B cell (primary cell): ENCODE measurements at regions of chr6 and their contacts with region 1.

Region 1: GRCh38 chr6:6588064-6588923 is at the start of gene LY86:
- DNase-seq: peak; percentile 87
- ATAC-seq: peak; percentile 65
- H3K4me3 ChIP-seq: peak within 1 kb of the TSS; percentile 52 to 84 (median 81)
- H3K4me3 Mint-ChIP-seq: peak within 1 kb of the TSS; percentile 98
- H3K27ac ChIP-seq: peak within 1 kb of the TSS; percentile 88 to 91
- H3K27ac Mint-ChIP-seq: peak within 1 kb of the TSS; percentile 99
- H3K4me1 ChIP-seq: peaks cover 83 to 85% of the 10 kb centered on the region in 2 donors
- H3K4me1 Mint-ChIP-seq: peaks cover 93% of the 10 kb centered on the region
- H3K27me3 ChIP-seq: no peaks in the 10 kb centered on the region
- H3K27me3 Mint-ChIP-seq: no peaks in the 10 kb centered on the region
- CTCF ChIP-seq: peak; percentile 16
- total RNA-seq, gene LY86: 68.7 and 76.7 TPM in 2 replicates

Region 2: DNA sequence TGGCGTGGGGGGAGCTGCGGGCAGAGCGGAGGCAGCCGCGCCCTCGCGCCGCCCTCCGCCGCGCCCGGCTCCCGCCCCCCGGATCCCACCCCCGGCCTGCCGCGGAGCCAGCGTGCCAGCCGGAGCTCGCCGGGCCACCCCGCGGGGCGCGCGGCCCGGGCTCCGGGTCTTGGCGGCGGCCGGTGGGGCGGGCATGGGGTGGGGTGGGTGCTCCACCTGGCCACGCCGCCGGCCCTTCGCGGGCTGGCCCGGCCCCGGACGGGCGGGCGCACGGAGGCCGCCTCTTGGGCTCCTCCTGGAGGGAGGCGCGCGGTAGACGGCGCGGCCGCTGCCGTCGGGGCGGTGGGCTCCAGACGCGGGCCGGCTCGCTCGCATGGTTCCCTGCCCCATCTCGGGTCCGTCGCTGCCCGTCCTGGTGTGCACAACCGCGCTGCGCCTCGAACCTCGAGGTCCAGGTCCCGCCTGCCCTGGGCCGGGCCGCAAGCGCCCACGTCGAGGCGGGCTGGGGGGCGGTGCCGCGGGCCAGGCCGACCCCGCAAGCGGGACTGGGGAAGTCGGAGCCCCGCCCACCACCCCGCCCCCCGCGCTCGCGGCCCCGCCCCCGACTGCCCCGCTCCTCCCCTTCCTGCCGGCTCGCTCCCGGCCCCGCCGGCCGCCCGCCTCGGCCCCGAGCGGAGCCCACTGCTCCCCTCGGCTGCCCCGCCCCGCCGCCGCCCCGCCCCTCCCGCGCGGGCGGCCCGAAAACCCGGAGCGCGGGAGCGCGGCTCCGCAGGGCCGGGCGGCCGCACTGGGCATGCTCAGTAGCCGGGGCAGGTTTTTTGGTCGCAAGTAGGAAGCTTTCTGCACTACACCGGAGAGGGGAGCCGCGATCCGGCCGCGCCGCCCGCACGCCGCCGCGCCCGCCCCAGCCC is 1812.5 kb before region 1 on chr6 and contains the start of gene CDYL:
- CTCF ChIA-PET with region 1: no interaction called
- POLR2A ChIA-PET with region 1: no interaction called
- intact Hi-C with region 1: loop called (anchors 10 kb)
- DNase-seq: peak; percentile 94
- ATAC-seq: peak; percentile 74
- H3K4me3 ChIP-seq: peak within 1 kb of the TSS; percentile 51 to 83 (median 72)
- H3K4me3 Mint-ChIP-seq: peak within 1 kb of the TSS; percentile 97
- H3K27ac ChIP-seq: peak within 1 kb of the TSS in 1 of 2 donors; percentile 69
- H3K27ac Mint-ChIP-seq: peak within 1 kb of the TSS; percentile 93
- H3K4me1 ChIP-seq: peaks cover 19 to 26% of the 10 kb centered on the region in 2 donors
- H3K4me1 Mint-ChIP-seq: peaks cover 41% of the 10 kb centered on the region
- H3K27me3 ChIP-seq: no peaks in the 10 kb centered on the region
- H3K27me3 Mint-ChIP-seq: no peaks in the 10 kb centered on the region
- CTCF ChIP-seq: no peak
- total RNA-seq, gene CDYL: 61.0 and 63.0 TPM in 2 replicates

Region 3: GRCh38 chr6:6331946-6332601 is 256.2 kb before region 1 on chr6:
- CTCF ChIA-PET with region 1: no interaction called
- POLR2A ChIA-PET with region 1: interaction called, 3 read pairs
- intact Hi-C with region 1: loop called (anchors 2 kb)
- DNase-seq: peak; percentile 69
- ATAC-seq: peak; percentile 78
- H3K4me3 ChIP-seq: peak overlapping the region in 1 of 5 experiments; percentile 13
- H3K4me3 Mint-ChIP-seq: peak overlapping the region; percentile 86
- H3K27ac ChIP-seq: peak overlapping the region in 1 of 2 donors; percentile 22
- H3K27ac Mint-ChIP-seq: peak overlapping the region; percentile 98
- H3K4me1 ChIP-seq: peaks cover 37% of the 10 kb centered on the region in 2 donors
- H3K4me1 Mint-ChIP-seq: peaks cover 48% of the 10 kb centered on the region
- H3K27me3 ChIP-seq: no peaks in the 10 kb centered on the region
- H3K27me3 Mint-ChIP-seq: no peaks in the 10 kb centered on the region
- CTCF ChIP-seq: no peak

Region 4: DNA sequence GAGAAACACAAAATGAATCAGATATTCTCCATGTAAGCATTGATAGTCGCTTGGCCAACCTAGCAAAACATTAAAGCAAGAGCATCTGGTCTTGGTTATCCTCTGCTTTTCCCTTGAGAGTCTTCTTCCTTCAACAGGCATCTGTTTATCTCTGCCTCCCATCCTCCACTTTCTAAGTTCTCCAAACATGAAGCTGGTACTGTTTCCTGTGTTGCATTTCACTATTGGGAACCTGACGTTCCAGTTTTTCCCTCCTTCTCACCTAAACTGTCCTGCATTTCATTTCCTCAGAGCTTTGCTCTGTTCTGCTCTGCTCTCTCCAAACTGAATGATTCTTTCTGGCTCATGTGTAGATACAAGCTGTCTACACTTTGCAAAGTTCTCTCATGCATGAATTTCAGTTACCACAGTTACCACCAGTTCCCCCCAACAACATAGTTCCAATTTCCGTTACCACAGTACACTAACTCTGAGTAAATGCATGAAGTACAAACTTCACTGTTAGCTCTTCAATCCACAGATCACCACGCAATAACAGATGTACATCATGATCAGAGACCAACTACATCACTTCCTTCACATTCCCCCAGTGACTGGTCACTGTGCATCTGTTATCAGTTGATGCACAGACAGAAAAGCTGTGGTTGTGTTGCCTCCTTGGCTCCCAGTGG is 181.1 kb before region 1 on chr6:
- CTCF ChIA-PET with region 1: interaction called, 3 read pairs
- POLR2A ChIA-PET with region 1: no interaction called
- intact Hi-C with region 1: loop called (anchors 1 kb)
- DNase-seq: peak; percentile 90
- ATAC-seq: peak; percentile 85
- H3K4me3 ChIP-seq: peak overlapping the region in 3 of 5 experiments; percentile 1 to 45 (median 32)
- H3K4me3 Mint-ChIP-seq: no peak overlapping the region
- H3K27ac ChIP-seq: peak overlapping the region; percentile 65 to 69
- H3K27ac Mint-ChIP-seq: no peak overlapping the region
- H3K4me1 ChIP-seq: peaks cover 24 to 25% of the 10 kb centered on the region in 2 donors
- H3K4me1 Mint-ChIP-seq: peaks cover 4% of the 10 kb centered on the region
- H3K27me3 ChIP-seq: peaks cover 0 to 18% (median 14%) of the 10 kb centered on the region in 4 experiments
- H3K27me3 Mint-ChIP-seq: peaks cover 24% of the 10 kb centered on the region
- CTCF ChIP-seq: no peak

Region 5: DNA sequence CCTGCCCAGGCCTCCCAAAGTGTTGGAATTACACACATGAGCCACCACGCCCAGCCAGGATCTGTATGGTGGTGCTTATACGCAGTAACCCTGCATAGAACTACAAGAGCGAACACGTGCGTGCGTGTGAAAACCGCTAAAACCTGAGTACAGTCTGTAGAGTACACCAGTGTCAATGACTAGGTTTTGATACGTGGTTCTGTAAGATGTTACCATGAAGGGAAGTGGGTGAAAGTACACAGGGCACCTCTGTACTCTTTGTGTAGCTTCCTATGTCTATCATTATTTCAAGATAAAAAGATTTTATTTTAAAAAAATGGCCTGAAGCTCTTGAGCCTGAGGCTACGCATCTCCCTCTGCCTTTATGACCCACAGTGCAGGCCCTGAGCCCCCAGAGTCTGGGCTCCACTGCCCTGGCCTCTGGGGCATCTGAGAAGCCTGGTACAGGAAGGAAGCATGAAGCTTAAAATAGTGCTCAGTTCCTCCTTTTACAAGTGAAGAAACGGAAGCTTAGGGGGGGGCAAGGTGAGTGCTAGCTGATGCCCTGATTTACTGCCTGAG is 21.8 kb after region 1 on chr6:
- CTCF ChIA-PET with region 1: interaction called, 10 read pairs
- POLR2A ChIA-PET with region 1: interaction called, 27 read pairs
- intact Hi-C with region 1: loop called (anchors 1 kb)
- DNase-seq: peak; percentile 84
- ATAC-seq: peak; percentile 95
- H3K4me3 ChIP-seq: peak overlapping the region in 3 of 5 experiments; percentile 1 to 20 (median 13)
- H3K4me3 Mint-ChIP-seq: peak overlapping the region; percentile 76
- H3K27ac ChIP-seq: peak overlapping the region; percentile 77 to 91
- H3K27ac Mint-ChIP-seq: peak overlapping the region; percentile 95
- H3K4me1 ChIP-seq: peaks cover 52 to 57% of the 10 kb centered on the region in 2 donors
- H3K4me1 Mint-ChIP-seq: peaks cover 80% of the 10 kb centered on the region
- H3K27me3 ChIP-seq: no peaks in the 10 kb centered on the region
- H3K27me3 Mint-ChIP-seq: no peaks in the 10 kb centered on the region
- CTCF ChIP-seq: no peak

Region 6: DNA sequence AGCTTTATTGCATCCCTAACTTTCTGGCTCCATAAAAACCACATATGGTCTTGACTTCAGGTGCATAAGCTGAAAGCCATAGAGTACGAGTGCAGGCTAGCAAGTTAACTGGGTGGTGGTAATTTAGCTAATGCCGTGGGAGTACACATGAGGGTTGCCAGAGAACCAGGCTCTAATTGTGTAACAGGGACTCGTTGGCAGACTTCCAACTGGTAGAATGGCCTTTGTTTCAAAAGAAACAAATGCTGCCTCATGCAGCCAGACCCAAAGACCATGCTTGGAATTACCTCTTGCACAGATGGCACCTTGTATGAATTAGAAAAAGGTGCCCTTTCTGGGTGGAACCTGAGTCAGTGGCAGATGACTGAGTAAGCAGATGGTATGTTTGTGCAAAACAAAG is 73.4 kb after region 1 on chr6:
- CTCF ChIA-PET with region 1: interaction called, 6 read pairs
- POLR2A ChIA-PET with region 1: interaction called, 14 read pairs
- intact Hi-C with region 1: loop called (anchors 1 kb)
- DNase-seq: no peak
- ATAC-seq: no peak
- H3K4me3 ChIP-seq: no peak overlapping the region
- H3K4me3 Mint-ChIP-seq: no peak overlapping the region
- H3K27ac ChIP-seq: no peak overlapping the region
- H3K27ac Mint-ChIP-seq: no peak overlapping the region
- H3K4me1 ChIP-seq: peaks cover 28 to 33% of the 10 kb centered on the region in 2 donors
- H3K4me1 Mint-ChIP-seq: peaks cover 32% of the 10 kb centered on the region
- H3K27me3 ChIP-seq: no peaks in the 10 kb centered on the region
- H3K27me3 Mint-ChIP-seq: peaks cover 3% of the 10 kb centered on the region
- CTCF ChIP-seq: no peak

Region 7: DNA sequence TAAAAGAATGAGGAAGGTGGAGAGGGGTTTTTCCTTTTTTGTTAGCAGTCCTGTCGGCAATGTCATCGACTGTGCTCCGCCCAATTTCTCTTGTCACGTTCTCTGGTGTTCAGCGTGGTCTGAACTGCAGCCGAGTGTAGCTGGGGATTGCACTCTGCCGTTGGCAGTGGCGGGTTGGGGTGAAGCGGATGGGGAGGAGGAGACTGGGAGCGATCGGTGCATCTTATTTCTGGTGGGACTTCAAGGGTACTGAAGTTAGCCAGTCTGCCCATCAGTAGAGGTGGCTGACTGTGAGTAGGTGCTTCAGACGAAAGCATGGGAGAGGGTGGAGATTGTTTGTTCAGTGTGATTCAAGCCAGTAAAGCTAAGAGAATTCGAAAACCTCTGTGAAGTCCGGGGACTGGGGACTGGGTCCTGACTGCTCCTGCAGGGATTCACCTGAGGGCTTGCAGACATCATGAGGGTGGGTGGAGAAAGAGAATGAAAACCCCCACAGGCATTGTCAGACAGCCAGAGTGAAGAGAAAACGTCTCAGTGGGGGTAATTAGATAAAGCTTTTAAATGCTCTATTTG is 524.5 kb after region 1 on chr6:
- CTCF ChIA-PET with region 1: no interaction called
- POLR2A ChIA-PET with region 1: no interaction called
- intact Hi-C with region 1: loop called (anchors 5 kb)
- DNase-seq: peak; percentile 87
- ATAC-seq: peak; percentile 67
- H3K4me3 ChIP-seq: peak overlapping the region in 4 of 5 experiments; percentile 15 to 48 (median 26)
- H3K4me3 Mint-ChIP-seq: peak overlapping the region; percentile 86
- H3K27ac ChIP-seq: peak overlapping the region; percentile 59 to 70
- H3K27ac Mint-ChIP-seq: peak overlapping the region; percentile 91
- H3K4me1 ChIP-seq: peaks cover 43 to 55% of the 10 kb centered on the region in 2 donors
- H3K4me1 Mint-ChIP-seq: peaks cover 75% of the 10 kb centered on the region
- H3K27me3 ChIP-seq: no peaks in the 10 kb centered on the region
- H3K27me3 Mint-ChIP-seq: no peaks in the 10 kb centered on the region
- CTCF ChIP-seq: no peak